Activated CD4-positive, alpha-beta memory T cell treated with anti-CD3 and anti-CD28 coated beads for 36 hours (primary cell): ENCODE measurements at regions of chr1 and their contacts with region 1.

Region 1: DNA sequence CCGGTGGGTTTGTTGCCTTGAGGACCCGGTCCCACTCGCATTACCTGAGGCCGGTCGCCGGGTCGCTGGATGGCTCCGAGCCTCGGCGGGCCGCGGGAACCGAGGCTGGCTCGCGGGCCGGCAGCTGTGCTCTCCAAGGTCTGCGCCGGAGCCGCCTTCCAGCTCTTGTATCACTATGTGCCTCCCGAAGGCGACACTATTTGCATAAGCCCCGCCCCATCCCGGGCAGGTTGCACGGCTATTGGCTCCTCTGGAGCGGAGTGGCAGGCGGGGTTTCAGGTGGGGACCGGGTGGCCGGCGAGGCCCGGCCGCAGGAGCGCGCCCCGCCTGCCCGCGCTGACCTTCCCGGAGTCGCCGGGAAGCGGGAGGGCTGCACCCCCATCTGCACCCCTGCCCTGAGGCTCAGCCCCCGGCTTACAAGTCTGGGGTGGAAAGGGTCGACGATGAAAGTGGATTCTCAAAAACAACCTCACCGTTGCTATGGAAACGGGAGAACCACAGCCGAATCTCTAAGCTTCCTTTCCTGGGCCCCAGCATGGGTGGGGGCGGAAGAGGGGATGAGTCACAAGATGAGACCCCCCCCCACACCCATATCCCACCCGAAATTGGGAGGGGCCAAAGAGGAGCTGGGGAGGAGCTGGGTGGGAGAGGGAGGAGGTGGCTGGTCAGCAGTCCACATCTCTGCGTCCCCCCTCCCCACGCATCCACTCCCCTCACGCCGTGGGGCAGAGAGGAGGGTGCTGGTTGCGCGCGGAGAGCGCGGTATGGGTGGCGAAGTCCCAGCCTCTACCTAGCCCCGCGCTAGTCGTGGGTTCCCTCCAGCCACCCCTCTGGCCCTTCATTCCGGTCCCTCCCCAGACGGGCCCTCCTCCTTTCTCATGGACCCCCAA is at the start of gene HPCAL4:
- DNase-seq: peak; percentile 90
- H3K4me3 Mint-ChIP-seq: peak within 1 kb of the TSS; percentile 70
- H3K27ac Mint-ChIP-seq: no peak within 1 kb of the TSS
- H3K4me1 Mint-ChIP-seq: peaks cover 39% of the 10 kb centered on the region
- H3K27me3 Mint-ChIP-seq: peaks cover 5% of the 10 kb centered on the region
- total RNA-seq, gene HPCAL4: 0.43 to 0.61 TPM

Region 2: GRCh38 chr1:39666772-39667171 is 24.7 kb before region 1 on chr1:
- CTCF ChIA-PET with region 1: interaction called, 21 read pairs
- POLR2A ChIA-PET with region 1: interaction called, 3 read pairs
- intact Hi-C with region 1: loop called (anchors 2 kb)
- DNase-seq: peak; percentile 71
- H3K4me3 Mint-ChIP-seq: no peak overlapping the region
- H3K27ac Mint-ChIP-seq: peak overlapping the region; percentile 47
- H3K4me1 Mint-ChIP-seq: peaks cover 20% of the 10 kb centered on the region
- H3K27me3 Mint-ChIP-seq: peaks cover 27% of the 10 kb centered on the region

Region 3: DNA sequence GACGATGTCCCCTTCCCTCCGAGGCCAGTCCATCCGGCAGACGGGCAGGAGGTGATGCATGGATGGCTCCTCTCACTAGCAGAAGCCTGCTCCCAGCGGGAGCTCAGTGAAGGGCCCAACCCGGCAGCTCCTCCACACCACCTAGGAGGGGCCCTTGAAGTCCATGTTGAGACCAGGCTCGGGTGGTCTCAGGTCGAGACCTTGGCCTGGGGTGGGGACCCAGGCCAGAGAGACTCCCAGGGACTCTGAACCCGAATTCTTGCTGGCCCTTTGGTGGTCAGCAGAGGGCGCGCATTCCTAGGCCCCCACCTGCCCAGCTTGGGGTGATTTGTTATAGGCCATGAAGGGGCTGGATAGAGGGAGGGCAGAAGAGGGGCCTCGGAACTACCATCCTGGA is 19.0 kb before region 1 on chr1:
- CTCF ChIA-PET with region 1: interaction called, 21 read pairs
- POLR2A ChIA-PET with region 1: interaction called, 3 read pairs
- intact Hi-C with region 1: loop called (anchors 2 kb)
- DNase-seq: peak; percentile 54
- H3K4me3 Mint-ChIP-seq: peak overlapping the region; percentile 36
- H3K27ac Mint-ChIP-seq: no peak overlapping the region
- H3K4me1 Mint-ChIP-seq: peaks cover 3% of the 10 kb centered on the region
- H3K27me3 Mint-ChIP-seq: peaks cover 25% of the 10 kb centered on the region

Region 4: GRCh38 chr1:39738622-39739366 is 47.3 kb after region 1 on chr1 and contains the start of gene PPIE:
- CTCF ChIA-PET with region 1: no interaction called
- POLR2A ChIA-PET with region 1: no interaction called
- intact Hi-C with region 1: loop called (anchors 2 kb)
- DNase-seq: peak; percentile 98
- H3K4me3 Mint-ChIP-seq: peak within 1 kb of the TSS; percentile 97
- H3K27ac Mint-ChIP-seq: peak within 1 kb of the TSS; percentile 88
- H3K4me1 Mint-ChIP-seq: peaks cover 34% of the 10 kb centered on the region
- H3K27me3 Mint-ChIP-seq: peaks cover 10% of the 10 kb centered on the region
- total RNA-seq, gene PPIE: 64.1 to 68.7 TPM